ENCODE measurements at regions of chr17 and their contacts with region 1.

Region 1: GRCh38 chr17:55750750-55751657 is at the start of gene PCTP:
- DNase-seq: peak; percentile 97
- ATAC-seq: peak; percentile 96
- H3K4me3 ChIP-seq: peak within 1 kb of the TSS; percentile 90
- H3K27ac ChIP-seq: peak within 1 kb of the TSS; percentile 46
- H3K4me1 ChIP-seq: peaks cover 13% of the 10 kb centered on the region
- H3K27me3 ChIP-seq: 0 out of 2 replicates have a peak, but pooled peaks cover 3% of the 10 kb centered on the region
- CTCF ChIP-seq: peak; percentile 46
- total RNA-seq, gene PCTP: 15.4 and 17.6 TPM in 2 replicates

Region 2: GRCh38 chr17:55421179-55421934 is 329.6 kb before region 1 on chr17 and contains the start of gene MMD:
- CTCF ChIA-PET with region 1: no interaction called
- POLR2A ChIA-PET with region 1: no interaction called
- intact Hi-C with region 1: no loop called
- DNase-seq: peak; percentile 34
- ATAC-seq: peak; percentile 53
- H3K4me3 ChIP-seq: peak within 1 kb of the TSS; percentile 92
- H3K27ac ChIP-seq: peak within 1 kb of the TSS; percentile 16; the same call in 1 of the 2 replicates
- H3K4me1 ChIP-seq: peaks cover 13% of the 10 kb centered on the region
- H3K27me3 ChIP-seq: peaks cover 14% of the 10 kb centered on the region
- CTCF ChIP-seq: no peak
- total RNA-seq, gene MMD: 10.9 and 24.1 TPM in 2 replicates

Region 3: DNA sequence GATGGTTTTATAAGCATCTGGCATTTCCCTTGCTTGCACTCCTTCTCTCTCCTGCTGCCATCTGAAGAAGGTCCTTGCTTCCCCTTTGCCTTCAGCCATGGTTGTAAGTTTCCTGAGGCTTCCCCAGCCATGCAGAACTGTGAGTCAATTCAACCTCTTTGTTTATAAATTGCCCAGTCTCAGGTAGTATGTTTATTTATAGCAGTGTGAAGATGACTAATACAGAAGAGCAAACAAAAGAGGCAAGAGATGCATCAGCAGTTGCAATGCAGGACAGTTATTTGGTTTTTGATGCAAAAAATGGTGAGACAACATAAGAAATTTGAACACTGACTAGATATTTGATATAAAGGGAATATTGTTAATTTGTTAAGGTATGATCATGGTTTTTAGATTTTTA is 45.2 kb before region 1 on chr17:
- CTCF ChIA-PET with region 1: no interaction called
- POLR2A ChIA-PET with region 1: no interaction called
- intact Hi-C with region 1: loop called (anchors 5 kb)
- DNase-seq: peak; percentile 82
- ATAC-seq: peak; percentile 95
- H3K4me3 ChIP-seq: no peak overlapping the region
- H3K27ac ChIP-seq: no peak overlapping the region
- H3K4me1 ChIP-seq: peaks cover 29% of the 10 kb centered on the region
- H3K27me3 ChIP-seq: peaks cover 6% of the 10 kb centered on the region; the same call in 1 of the 2 replicates
- CTCF ChIP-seq: no peak

Region 4: GRCh38 chr17:55811536-55811935 is 60.5 kb after region 1 on chr17:
- CTCF ChIA-PET with region 1: no interaction called
- POLR2A ChIA-PET with region 1: no interaction called
- intact Hi-C with region 1: no loop called
- DNase-seq: no peak
- ATAC-seq: no peak
- H3K4me3 ChIP-seq: no peak overlapping the region
- H3K27ac ChIP-seq: no peak overlapping the region
- H3K4me1 ChIP-seq: no peaks in the 10 kb centered on the region
- H3K27me3 ChIP-seq: peaks cover 29% of the 10 kb centered on the region
- CTCF ChIP-seq: no peak